ENCODE measurements at regions of chr5 and their contacts with region 1.

Region 1: GRCh38 chr5:776792-777711 is 7.5 kb downstream of the ZDHHC11B start:
- DNase-seq: no peak
- ATAC-seq: no peak
- H3K4me3 ChIP-seq: no peak overlapping the region
- H3K27ac ChIP-seq: no peak overlapping the region
- H3K4me1 ChIP-seq: no peaks in the 10 kb centered on the region
- H3K27me3 ChIP-seq: no peaks in the 10 kb centered on the region
- CTCF ChIP-seq: no peak
- EP300 ChIP-seq: no peak
- POLR2A ChIP-seq: no peak
- RAD21 ChIP-seq: no peak

Region 2: GRCh38 chr5:683551-684481 is 93.2 kb before region 1 on chr5:
- CTCF ChIA-PET with region 1: no interaction called
- POLR2A ChIA-PET with region 1: no interaction called
- RAD21 ChIA-PET with region 1: no interaction called
- SMC1A ChIA-PET with region 1: no interaction called
- in situ Hi-C with region 1: loop called (anchors 5 kb)
- intact Hi-C with region 1: no loop called
- DNase-seq: no peak
- ATAC-seq: no peak; the same call in 2 of the 3 replicates
- H3K4me3 ChIP-seq: no peak overlapping the region
- H3K27ac ChIP-seq: no peak overlapping the region
- H3K4me1 ChIP-seq: no peaks in the 10 kb centered on the region
- H3K27me3 ChIP-seq: no peaks in the 10 kb centered on the region
- CTCF ChIP-seq: no peak
- EP300 ChIP-seq: no peak
- POLR2A ChIP-seq: no peak
- RAD21 ChIP-seq: no peak

Region 3: GRCh38 chr5:691817-692528 is 85.1 kb before region 1 on chr5:
- CTCF ChIA-PET with region 1: no interaction called
- POLR2A ChIA-PET with region 1: no interaction called
- RAD21 ChIA-PET with region 1: no interaction called
- SMC1A ChIA-PET with region 1: no interaction called
- in situ Hi-C with region 1: no loop called
- intact Hi-C with region 1: loop called (anchors 5 kb)
- DNase-seq: no peak
- ATAC-seq: no peak
- H3K4me3 ChIP-seq: no peak overlapping the region
- H3K27ac ChIP-seq: no peak overlapping the region
- H3K4me1 ChIP-seq: no peaks in the 10 kb centered on the region
- H3K27me3 ChIP-seq: no peaks in the 10 kb centered on the region
- CTCF ChIP-seq: no peak
- EP300 ChIP-seq: no peak
- POLR2A ChIP-seq: no peak
- RAD21 ChIP-seq: no peak